ENCODE measurements at regions of chr3 and their contacts with region 1.

Region 1: DNA sequence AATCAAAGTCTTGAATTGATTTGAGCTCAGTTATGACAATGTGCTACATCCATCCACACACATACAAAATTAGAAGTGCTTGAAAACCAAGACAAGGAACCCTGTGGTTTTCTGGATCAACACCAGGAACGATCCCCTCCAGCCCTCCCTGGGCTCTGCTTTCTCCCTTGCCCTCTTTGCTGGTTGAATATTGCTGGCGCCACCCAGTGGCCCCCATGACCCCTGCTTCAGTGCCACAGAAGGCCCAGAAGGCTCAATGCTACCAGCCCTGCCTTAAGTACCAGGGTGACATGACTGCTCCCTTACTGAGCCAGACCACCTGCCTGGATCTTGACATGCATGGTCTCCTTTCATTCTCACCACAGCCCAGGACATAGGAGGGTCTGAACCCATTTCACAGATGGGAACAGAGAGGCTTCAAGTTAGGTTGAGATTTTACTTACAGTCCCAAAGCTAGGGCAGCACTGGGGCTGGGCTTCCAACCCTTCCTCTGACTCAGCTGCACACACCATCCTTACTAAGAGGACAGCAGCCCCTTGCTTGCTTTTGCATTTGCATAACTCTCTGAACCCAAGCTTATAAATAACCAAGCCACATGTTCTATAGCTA is 15.0 kb downstream of the IL12A start:
- DNase-seq: peak; percentile 68
- H3K4me3 ChIP-seq: no peak overlapping the region
- H3K27ac ChIP-seq: no peak overlapping the region
- H3K4me1 ChIP-seq: no peaks in the 10 kb centered on the region
- H3K27me3 ChIP-seq: no peaks in the 10 kb centered on the region
- CTCF ChIP-seq: peak; percentile 67
- POLR2A ChIP-seq: no peak

Region 2: GRCh38 chr3:159322322-159322939 is 681.2 kb before region 1 on chr3:
- CTCF ChIA-PET with region 1: interaction called, 3 read pairs
- POLR2A ChIA-PET with region 1: no interaction called
- dilution Hi-C with region 1: no loop called
- intact Hi-C with region 1: loop called (anchors 1 kb)
- DNase-seq: no peak
- H3K4me3 ChIP-seq: no peak overlapping the region
- H3K27ac ChIP-seq: no peak overlapping the region
- H3K4me1 ChIP-seq: no peaks in the 10 kb centered on the region
- H3K27me3 ChIP-seq: no peaks in the 10 kb centered on the region
- CTCF ChIP-seq: peak; percentile 54 to 61
- POLR2A ChIP-seq: no peak

Region 3: DNA sequence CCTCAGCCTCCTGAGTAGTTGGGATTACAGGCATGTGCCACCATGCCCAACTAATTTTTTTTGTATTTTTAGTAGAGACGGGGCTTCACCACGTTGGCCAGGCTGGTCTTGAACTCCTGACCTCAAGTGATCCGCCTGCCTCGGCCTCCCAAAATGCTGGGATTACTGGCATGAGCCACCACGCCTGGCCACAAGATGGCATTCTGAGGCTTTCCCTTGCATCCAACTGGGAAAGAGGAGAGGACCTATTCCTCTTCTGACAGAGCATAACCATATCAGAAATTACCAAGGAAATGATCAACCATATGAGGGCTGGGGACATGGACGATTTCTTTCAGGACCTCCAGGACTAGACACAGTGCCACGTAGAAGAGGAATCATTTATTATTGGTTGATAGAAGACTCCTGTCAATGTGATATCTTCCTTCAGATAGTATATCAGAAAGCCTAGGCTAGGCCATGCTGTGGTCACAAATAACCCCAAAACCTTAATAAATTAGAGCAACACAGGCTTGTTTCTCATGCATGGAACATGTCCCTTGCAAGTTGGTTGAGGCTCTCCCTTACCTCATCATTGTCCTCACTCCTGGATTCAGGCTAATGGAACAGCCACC is 387.3 kb before region 1 on chr3:
- CTCF ChIA-PET with region 1: interaction called, 7 read pairs
- POLR2A ChIA-PET with region 1: no interaction called
- dilution Hi-C with region 1: no loop called
- intact Hi-C with region 1: loop called (anchors 1 kb)
- DNase-seq: peak; percentile 60
- H3K4me3 ChIP-seq: no peak overlapping the region
- H3K27ac ChIP-seq: no peak overlapping the region
- H3K4me1 ChIP-seq: peaks cover 18% of the 10 kb centered on the region
- H3K27me3 ChIP-seq: no peaks in the 10 kb centered on the region
- CTCF ChIP-seq: peak; percentile 38 to 64
- POLR2A ChIP-seq: no peak

Region 4: DNA sequence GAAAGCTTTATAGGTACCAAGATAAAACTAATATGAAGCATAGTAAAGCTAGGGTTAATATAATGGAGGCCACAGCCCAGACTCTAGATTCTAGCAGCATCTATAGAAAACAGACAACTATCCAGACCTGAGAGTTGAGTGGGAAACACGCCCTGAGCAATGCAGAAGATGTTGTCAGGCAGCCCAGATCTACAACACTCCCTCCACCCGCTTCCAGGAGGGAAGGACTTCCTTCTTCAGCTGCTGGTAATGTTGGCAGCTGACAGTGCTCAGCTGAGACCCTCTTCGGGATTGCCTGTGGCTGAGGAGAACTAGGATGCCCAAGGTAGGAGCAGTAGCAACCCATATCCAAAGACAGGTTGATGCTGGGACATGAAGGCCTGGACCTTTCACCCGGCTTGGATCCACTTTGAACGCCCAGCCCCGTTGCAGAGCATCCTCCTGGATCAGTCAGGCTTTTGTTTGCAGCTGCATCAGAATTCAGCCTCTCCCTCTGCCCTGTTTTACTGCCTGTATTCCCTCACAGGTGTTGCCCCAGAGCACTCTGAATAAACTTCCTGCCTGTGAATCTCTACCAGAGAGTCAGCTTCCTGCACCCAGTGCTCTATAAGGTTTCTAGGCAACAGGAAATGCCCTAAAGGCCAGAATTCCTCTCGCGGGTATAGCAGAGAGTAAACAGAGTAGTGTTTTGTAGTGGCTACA is 189.7 kb before region 1 on chr3:
- CTCF ChIA-PET with region 1: interaction called, 14 read pairs
- POLR2A ChIA-PET with region 1: no interaction called
- dilution Hi-C with region 1: no loop called
- intact Hi-C with region 1: no loop called
- DNase-seq: no peak
- H3K4me3 ChIP-seq: no peak overlapping the region
- H3K27ac ChIP-seq: no peak overlapping the region
- H3K4me1 ChIP-seq: peaks cover 9% of the 10 kb centered on the region
- H3K27me3 ChIP-seq: no peaks in the 10 kb centered on the region
- CTCF ChIP-seq: no peak
- POLR2A ChIP-seq: no peak

Region 5: GRCh38 chr3:159892171-159892795 is 111.3 kb before region 1 on chr3:
- CTCF ChIA-PET with region 1: interaction called, 227 read pairs
- POLR2A ChIA-PET with region 1: no interaction called
- dilution Hi-C with region 1: no loop called
- intact Hi-C with region 1: no loop called
- DNase-seq: no peak
- H3K4me3 ChIP-seq: no peak overlapping the region
- H3K27ac ChIP-seq: no peak overlapping the region
- H3K4me1 ChIP-seq: peaks cover 7% of the 10 kb centered on the region
- H3K27me3 ChIP-seq: no peaks in the 10 kb centered on the region
- CTCF ChIP-seq: no peak
- POLR2A ChIP-seq: no peak

Region 6: DNA sequence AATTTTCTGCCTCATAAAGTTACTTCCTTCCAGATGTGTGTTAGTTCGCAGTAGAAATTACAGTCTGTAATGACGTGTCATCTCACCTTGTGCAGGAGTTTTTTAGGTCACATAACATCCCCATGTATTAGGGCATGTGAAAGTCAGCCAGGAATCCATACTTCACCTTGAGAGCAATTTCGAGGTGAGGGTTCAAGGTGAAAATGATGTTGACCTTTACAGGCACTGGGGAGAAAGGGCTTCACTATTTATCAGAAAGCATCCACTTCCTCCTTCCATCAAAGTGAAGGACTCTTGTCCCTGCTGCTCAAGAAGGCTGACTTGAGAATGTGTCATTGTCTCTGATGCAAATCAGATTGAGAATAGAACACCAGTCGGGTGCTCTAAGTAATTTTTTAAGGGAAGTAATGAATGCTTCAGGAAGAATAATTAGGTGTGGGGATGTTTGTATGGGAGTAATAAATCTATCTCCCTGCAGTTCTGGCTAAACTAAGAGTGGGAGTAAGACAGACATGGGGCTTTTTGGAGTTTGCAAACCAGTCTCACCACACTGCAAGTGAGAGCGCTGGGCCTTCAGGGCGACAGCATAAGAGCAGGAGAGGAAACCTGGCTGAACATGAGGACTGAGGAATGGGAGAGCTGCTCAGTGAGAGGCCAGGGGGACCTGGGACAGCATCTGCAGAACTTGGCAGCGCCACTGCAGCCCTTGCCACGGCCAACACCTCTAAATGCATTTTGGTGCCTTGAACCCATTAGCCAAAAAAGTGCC is 100.9 kb before region 1 on chr3:
- CTCF ChIA-PET with region 1: interaction called, 16 read pairs
- POLR2A ChIA-PET with region 1: no interaction called
- dilution Hi-C with region 1: no loop called
- intact Hi-C with region 1: no loop called
- DNase-seq: no peak
- H3K4me3 ChIP-seq: no peak overlapping the region
- H3K27ac ChIP-seq: no peak overlapping the region
- H3K4me1 ChIP-seq: no peaks in the 10 kb centered on the region
- H3K27me3 ChIP-seq: no peaks in the 10 kb centered on the region
- CTCF ChIP-seq: no peak
- POLR2A ChIP-seq: no peak

Region 7: GRCh38 chr3:159929435-159930141 is 74.0 kb before region 1 on chr3:
- CTCF ChIA-PET with region 1: interaction called, 41 read pairs
- POLR2A ChIA-PET with region 1: no interaction called
- dilution Hi-C with region 1: no loop called
- intact Hi-C with region 1: no loop called
- DNase-seq: peak; percentile 70
- H3K4me3 ChIP-seq: no peak overlapping the region
- H3K27ac ChIP-seq: peak overlapping the region; percentile 41
- H3K4me1 ChIP-seq: peaks cover 14% of the 10 kb centered on the region
- H3K27me3 ChIP-seq: no peaks in the 10 kb centered on the region
- CTCF ChIP-seq: peak; percentile 11 to 33
- POLR2A ChIP-seq: no peak

Region 8: DNA sequence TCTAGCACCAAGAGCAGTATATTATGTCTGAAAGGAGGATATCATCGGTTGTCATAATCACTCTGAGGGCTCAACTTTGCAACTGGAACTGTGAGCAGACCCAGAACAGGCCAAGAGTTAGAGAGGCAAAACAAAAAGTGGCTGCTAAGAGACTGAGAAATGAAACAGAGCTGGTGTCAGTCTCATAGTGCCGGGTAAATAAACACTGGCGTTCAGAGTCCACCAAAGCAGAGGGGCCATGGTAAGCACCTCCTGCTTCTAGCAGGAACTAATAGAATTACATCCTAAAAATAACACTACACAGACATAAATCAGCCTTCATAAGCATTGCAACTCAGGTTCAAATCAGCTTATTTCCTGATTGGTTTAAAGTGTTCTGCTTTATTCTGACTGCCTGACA is 25.3 kb before region 1 on chr3:
- CTCF ChIA-PET with region 1: no interaction called
- POLR2A ChIA-PET with region 1: no interaction called
- dilution Hi-C with region 1: no loop called
- intact Hi-C with region 1: no loop called
- DNase-seq: no peak
- H3K4me3 ChIP-seq: no peak overlapping the region
- H3K27ac ChIP-seq: no peak overlapping the region
- H3K4me1 ChIP-seq: no peaks in the 10 kb centered on the region
- H3K27me3 ChIP-seq: peaks cover 0 to 2% of the 10 kb centered on the region in 2 experiments
- CTCF ChIP-seq: no peak
- POLR2A ChIP-seq: no peak

Region 9: GRCh38 chr3:160851629-160852210 is 848.1 kb after region 1 on chr3:
- CTCF ChIA-PET with region 1: no interaction called
- POLR2A ChIA-PET with region 1: no interaction called
- dilution Hi-C with region 1: no loop called
- intact Hi-C with region 1: no loop called
- DNase-seq: peak; percentile 4
- H3K4me3 ChIP-seq: no peak overlapping the region
- H3K27ac ChIP-seq: no peak overlapping the region
- H3K4me1 ChIP-seq: peaks cover 7% of the 10 kb centered on the region
- H3K27me3 ChIP-seq: no peaks in the 10 kb centered on the region
- CTCF ChIP-seq: no peak
- POLR2A ChIP-seq: no peak

Measured in endothelial cell of umbilical vein (primary cell).